GM12878 (cell line): ENCODE measurements at regions of chr10 and their contacts with region 1.

Region 1: DNA sequence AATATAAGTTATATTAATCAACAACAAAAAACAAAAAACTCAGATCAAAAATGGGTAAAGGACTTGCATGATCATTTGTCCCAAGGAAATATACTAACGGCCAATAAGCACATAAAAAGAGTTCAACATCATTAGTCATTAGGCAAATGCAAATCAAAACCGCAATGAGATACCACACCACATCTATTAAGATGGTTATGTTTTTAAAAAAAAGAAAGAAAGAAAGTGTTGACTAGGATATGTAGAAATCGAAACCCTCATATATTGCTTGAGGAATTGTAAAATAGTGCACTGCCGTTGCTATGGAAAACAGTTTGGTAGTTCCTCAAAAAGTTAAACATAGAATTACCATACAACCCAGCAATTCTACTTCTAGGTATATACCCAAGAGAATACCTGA is 39.4 kb upstream of the CTNNA3 start:
- DNase-seq: no peak
- ATAC-seq: peak; percentile 78
- H3K4me3 ChIP-seq: no peak overlapping the region
- H3K27ac ChIP-seq: no peak overlapping the region
- H3K4me1 ChIP-seq: no peaks in the 10 kb centered on the region
- H3K27me3 ChIP-seq: no peaks in the 10 kb centered on the region; a peak in 1 of 4 replicates
- CTCF ChIP-seq: no peak
- EP300 ChIP-seq: no peak
- POLR2A ChIP-seq: no peak
- RAD21 ChIP-seq: no peak

Region 2: DNA sequence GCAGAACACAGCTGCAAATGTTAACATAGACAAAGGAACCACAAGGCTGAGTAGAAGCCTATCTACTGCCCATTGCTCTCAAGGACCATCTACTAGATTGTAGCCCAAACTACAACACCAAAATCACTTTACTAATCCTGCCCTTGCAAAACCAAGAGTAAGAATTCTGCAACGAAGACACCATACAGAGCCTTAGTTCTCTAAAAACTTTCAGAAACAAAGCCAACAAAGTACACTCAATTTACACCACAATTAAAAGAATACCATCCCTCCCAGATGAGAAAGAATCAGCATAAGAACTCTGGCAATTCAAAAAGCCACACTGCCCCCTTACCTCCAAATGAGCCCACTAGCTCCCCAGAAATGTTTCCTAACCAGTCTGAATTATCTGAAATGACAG is 333.7 kb before region 1 on chr10:
- CTCF ChIA-PET with region 1: no interaction called
- POLR2A ChIA-PET with region 1: no interaction called
- RAD21 ChIA-PET with region 1: no interaction called
- SMC1A ChIA-PET with region 1: no interaction called
- in situ Hi-C with region 1: no loop called
- intact Hi-C with region 1: no loop called
- DNase-seq: no peak
- ATAC-seq: no peak
- H3K4me3 ChIP-seq: no peak overlapping the region
- H3K27ac ChIP-seq: no peak overlapping the region
- H3K4me1 ChIP-seq: no peaks in the 10 kb centered on the region
- H3K27me3 ChIP-seq: no peaks in the 10 kb centered on the region
- CTCF ChIP-seq: no peak
- EP300 ChIP-seq: no peak
- POLR2A ChIP-seq: no peak
- RAD21 ChIP-seq: no peak

Region 3: DNA sequence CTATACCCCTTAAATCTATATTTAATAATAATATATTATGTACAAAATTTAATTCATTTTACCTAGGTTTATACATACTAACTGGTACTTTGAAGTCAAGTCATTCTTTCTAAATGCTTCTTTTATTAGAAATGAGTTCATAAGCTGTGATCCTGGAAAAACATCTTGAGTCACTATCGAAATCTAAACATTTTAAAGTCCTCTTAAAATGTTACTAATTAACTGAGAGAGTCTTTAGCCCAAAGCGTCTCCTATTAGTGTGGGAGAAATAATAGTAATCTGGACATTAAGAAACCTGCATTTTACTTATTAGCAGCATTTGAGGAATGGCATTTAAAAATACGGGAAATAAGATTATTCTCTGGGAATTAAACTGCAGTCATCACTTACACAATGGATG is 182.2 kb before region 1 on chr10:
- CTCF ChIA-PET with region 1: no interaction called
- POLR2A ChIA-PET with region 1: no interaction called
- RAD21 ChIA-PET with region 1: no interaction called
- SMC1A ChIA-PET with region 1: no interaction called
- in situ Hi-C with region 1: no loop called
- intact Hi-C with region 1: no loop called
- DNase-seq: no peak
- ATAC-seq: no peak
- H3K4me3 ChIP-seq: no peak overlapping the region
- H3K27ac ChIP-seq: no peak overlapping the region
- H3K4me1 ChIP-seq: no peaks in the 10 kb centered on the region
- H3K27me3 ChIP-seq: no peaks in the 10 kb centered on the region
- CTCF ChIP-seq: no peak
- EP300 ChIP-seq: no peak
- POLR2A ChIP-seq: no peak
- RAD21 ChIP-seq: no peak

Region 4: GRCh38 chr10:67722113-67722512 is 13.3 kb before region 1 on chr10:
- CTCF ChIA-PET with region 1: interaction called, 5 read pairs
- POLR2A ChIA-PET with region 1: no interaction called
- RAD21 ChIA-PET with region 1: no interaction called
- SMC1A ChIA-PET with region 1: interaction called, 13 read pairs
- in situ Hi-C with region 1: no loop called
- intact Hi-C with region 1: no loop called
- DNase-seq: no peak
- ATAC-seq: peak; percentile 93
- H3K4me3 ChIP-seq: no peak overlapping the region
- H3K27ac ChIP-seq: no peak overlapping the region
- H3K4me1 ChIP-seq: peaks cover 3% of the 10 kb centered on the region; the same call in 1 of the 2 replicates
- H3K27me3 ChIP-seq: no peaks in the 10 kb centered on the region
- CTCF ChIP-seq: no peak
- EP300 ChIP-seq: no peak
- POLR2A ChIP-seq: no peak
- RAD21 ChIP-seq: no peak

Region 5: GRCh38 chr10:67858971-67859370 is 123.5 kb after region 1 on chr10:
- CTCF ChIA-PET with region 1: no interaction called
- POLR2A ChIA-PET with region 1: no interaction called
- RAD21 ChIA-PET with region 1: no interaction called
- SMC1A ChIA-PET with region 1: no interaction called
- in situ Hi-C with region 1: no loop called
- intact Hi-C with region 1: no loop called
- DNase-seq: no peak
- ATAC-seq: no peak
- H3K4me3 ChIP-seq: no peak overlapping the region
- H3K27ac ChIP-seq: no peak overlapping the region
- H3K4me1 ChIP-seq: no peaks in the 10 kb centered on the region
- H3K27me3 ChIP-seq: no peaks in the 10 kb centered on the region
- CTCF ChIP-seq: no peak
- EP300 ChIP-seq: no peak
- POLR2A ChIP-seq: no peak
- RAD21 ChIP-seq: no peak